Mammary epithelial cell (primary cell): ENCODE measurements at regions of chr12 and their contacts with region 1.

Region 1: DNA sequence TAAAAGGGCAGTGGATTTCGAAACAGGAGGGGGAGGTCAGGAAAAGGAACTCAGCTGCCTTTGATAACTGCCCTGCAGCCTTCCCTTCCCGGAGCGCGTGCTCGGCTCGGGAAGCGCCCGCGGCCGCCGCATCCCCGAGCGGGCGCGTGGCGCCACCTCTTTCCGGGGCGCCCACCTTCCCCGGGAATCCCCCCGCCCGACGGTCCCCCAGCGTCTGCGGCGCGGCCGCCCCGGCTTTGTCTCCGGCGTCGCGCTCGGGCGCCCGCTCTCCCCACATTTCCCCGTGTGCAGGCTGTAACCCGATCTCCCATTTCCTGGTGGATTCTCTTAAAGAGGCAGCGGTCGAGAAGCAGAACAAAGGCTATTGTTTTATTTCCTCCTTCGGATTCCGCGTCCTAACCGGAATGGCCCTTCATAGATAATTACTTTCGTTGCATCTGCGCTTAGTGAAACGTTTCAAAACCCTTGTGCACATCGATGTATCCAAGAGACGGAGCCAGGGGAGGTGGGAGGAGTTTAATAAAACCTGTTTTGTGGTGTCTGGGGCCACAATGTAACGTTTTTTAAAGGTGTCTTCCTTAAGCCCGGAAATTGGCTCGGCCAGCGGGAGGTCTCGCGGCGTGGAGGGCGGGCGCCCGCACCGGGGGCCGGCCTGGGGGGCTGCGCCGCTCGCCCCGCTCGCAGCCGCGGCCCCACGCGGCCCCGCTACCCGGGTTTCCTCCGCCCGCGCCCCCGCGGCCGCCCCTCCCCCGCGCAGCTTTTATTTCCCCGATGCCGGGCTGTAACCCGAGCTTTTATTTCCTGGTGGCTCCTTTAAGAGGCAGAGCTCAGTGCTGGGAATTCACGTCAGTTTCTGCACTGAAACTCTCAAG is at the start of gene ETV6:
- DNase-seq: peak; percentile 90
- H3K4me3 ChIP-seq: peak within 1 kb of the TSS; percentile 69 to 99 (median 92)
- H3K27ac ChIP-seq: peak within 1 kb of the TSS; percentile 97
- H3K4me1 ChIP-seq: peaks cover 21% of the 10 kb centered on the region
- H3K27me3 ChIP-seq: no peaks in the 10 kb centered on the region
- CTCF ChIP-seq: no peak
- total RNA-seq, gene ETV6: 16.7 to 28.3 TPM

Region 2: DNA sequence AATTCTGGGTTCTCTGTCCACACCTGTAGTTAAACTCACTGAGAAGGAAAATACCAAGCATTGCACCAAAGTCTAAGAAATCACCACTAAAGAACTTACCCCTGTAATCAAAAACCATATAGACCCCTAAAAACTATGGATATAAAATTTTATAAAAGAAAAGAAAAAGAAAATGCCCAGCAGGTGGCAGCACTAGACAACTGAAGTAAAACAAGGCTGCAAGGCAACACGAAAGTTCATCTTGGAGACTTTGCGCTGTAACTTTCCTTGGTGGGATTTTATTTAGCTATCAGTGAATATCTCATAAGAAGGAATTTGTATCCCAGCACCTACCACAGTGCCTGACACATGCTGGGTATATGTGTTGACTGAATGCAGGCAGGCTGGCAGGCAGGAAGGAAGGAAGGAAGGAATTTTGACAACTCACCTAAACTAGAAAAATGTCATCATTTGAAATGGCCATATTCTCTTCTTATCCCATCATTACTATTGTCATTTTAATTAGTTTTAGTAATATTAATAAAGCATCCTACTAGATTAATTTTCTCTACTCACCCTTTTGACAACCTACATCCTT is 67.8 kb before region 1 on chr12:
- CTCF ChIA-PET with region 1: no interaction called
- dilution Hi-C with region 1: no loop called
- in situ Hi-C with region 1: no loop called
- intact Hi-C with region 1: loop called (anchors 1 kb)
- DNase-seq: peak; percentile 52
- H3K4me3 ChIP-seq: no peak overlapping the region
- H3K27ac ChIP-seq: no peak overlapping the region
- H3K4me1 ChIP-seq: peaks cover 24% of the 10 kb centered on the region
- H3K27me3 ChIP-seq: no peaks in the 10 kb centered on the region
- CTCF ChIP-seq: peak; percentile 27 to 48

Region 3: DNA sequence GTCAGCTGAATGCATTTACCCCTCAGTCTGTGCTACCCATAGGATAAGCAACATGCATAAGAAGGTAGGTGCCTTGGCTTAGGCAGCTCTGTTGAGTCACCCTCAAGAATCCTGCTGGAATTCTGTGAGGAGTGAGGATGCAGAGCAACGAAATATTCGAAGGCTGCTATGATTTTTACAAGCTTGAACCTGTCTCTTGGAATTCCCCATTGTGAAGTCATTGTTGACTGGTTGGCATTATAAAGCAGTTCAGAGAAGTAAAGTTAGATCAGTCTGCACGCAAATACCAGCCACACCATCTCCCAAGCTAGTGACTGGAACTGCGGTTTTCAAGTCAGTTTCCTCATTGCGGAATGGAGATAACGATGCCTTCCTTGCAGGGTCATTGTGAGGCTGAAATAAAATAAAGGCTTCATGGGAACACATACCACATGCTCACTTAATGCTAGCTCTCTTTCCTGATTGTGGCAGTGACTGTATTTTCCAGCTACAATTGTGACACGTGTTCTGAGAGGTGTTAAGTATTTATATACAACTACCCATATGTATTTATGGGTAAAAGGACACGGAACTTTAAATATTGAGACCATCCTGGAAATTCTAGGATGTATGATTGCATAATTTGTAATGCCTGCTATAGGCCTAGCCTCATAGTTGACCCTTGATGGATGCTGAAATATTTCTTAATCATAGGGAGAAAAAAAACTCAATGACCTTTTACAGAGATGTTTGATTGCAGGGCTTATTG is 97.1 kb after region 1 on chr12:
- CTCF ChIA-PET with region 1: no interaction called
- dilution Hi-C with region 1: no loop called
- in situ Hi-C with region 1: no loop called
- intact Hi-C with region 1: loop called (anchors 1 kb)
- DNase-seq: peak; percentile 99
- H3K4me3 ChIP-seq: no peak overlapping the region
- H3K27ac ChIP-seq: peak overlapping the region; percentile 89
- H3K4me1 ChIP-seq: peaks cover 62% of the 10 kb centered on the region
- H3K27me3 ChIP-seq: no peaks in the 10 kb centered on the region
- CTCF ChIP-seq: no peak

Region 4: GRCh38 chr12:11812586-11813427 is 163.7 kb after region 1 on chr12:
- CTCF ChIA-PET with region 1: no interaction called
- dilution Hi-C with region 1: no loop called
- in situ Hi-C with region 1: no loop called
- intact Hi-C with region 1: loop called (anchors 5 kb)
- DNase-seq: peak; percentile 36
- H3K4me3 ChIP-seq: peak overlapping the region in 2 of 3 experiments; percentile 18 to 32
- H3K27ac ChIP-seq: peak overlapping the region; percentile 26
- H3K4me1 ChIP-seq: peaks cover 28% of the 10 kb centered on the region
- H3K27me3 ChIP-seq: no peaks in the 10 kb centered on the region
- CTCF ChIP-seq: peak in 1 of 2 donors; percentile 20

Region 5: DNA sequence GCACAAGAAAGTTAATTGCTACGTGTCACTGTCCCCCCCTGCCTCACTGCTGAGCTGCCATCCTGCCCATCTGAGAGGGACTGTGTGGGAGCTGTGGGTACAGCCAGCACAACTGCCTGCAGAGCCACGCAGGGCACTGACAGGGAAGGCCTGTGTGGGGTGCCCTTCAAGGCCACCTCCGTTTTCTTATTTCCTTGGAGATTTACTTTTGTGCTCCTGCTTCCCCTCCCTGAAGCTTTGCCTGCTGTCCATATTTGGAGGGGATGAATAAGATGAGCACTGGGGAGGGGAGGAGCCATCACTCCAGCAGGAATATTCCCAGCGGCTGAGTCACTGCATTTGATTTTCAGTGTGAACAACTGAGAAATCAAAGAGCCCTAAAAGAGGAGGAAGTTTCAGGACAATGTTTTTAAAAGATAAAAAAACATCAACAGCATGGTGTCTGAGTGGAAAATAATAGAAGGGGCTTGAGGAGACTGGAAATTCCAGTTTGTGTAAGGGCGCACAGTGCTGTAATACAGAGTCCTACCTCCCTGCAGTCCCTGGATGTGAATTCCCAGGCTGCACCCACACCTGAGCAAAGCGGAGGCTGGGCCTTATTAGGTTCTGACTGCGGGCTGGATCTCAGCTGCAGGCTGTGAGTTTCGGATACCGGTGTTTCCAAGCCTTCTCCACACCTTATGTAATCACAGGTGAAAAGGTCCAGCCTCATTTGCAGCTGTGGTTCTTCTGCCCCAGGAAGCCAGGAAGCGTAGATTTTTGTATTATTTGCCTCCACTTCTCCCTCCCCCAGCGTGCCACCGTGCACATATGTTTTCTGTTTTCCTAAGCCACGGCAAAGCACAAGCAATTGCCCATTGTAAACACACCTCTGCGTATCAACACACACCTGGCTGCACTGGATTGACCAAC is 229.1 kb after region 1 on chr12:
- CTCF ChIA-PET with region 1: no interaction called
- dilution Hi-C with region 1: no loop called
- in situ Hi-C with region 1: no loop called
- intact Hi-C with region 1: loop called (anchors 2 kb)
- DNase-seq: peak; percentile 92
- H3K4me3 ChIP-seq: peak overlapping the region in 1 of 3 experiments; percentile 7
- H3K27ac ChIP-seq: peak overlapping the region; percentile 80
- H3K4me1 ChIP-seq: peaks cover 55% of the 10 kb centered on the region
- H3K27me3 ChIP-seq: no peaks in the 10 kb centered on the region
- CTCF ChIP-seq: no peak

Region 6: GRCh38 chr12:11941606-11942337 is 292.7 kb after region 1 on chr12:
- CTCF ChIA-PET with region 1: no interaction called
- dilution Hi-C with region 1: no loop called
- in situ Hi-C with region 1: no loop called
- intact Hi-C with region 1: loop called (anchors 2 kb)
- DNase-seq: peak; percentile 89
- H3K4me3 ChIP-seq: no peak overlapping the region
- H3K27ac ChIP-seq: peak overlapping the region; percentile 84
- H3K4me1 ChIP-seq: peaks cover 14% of the 10 kb centered on the region
- H3K27me3 ChIP-seq: no peaks in the 10 kb centered on the region
- CTCF ChIP-seq: no peak

Region 7: DNA sequence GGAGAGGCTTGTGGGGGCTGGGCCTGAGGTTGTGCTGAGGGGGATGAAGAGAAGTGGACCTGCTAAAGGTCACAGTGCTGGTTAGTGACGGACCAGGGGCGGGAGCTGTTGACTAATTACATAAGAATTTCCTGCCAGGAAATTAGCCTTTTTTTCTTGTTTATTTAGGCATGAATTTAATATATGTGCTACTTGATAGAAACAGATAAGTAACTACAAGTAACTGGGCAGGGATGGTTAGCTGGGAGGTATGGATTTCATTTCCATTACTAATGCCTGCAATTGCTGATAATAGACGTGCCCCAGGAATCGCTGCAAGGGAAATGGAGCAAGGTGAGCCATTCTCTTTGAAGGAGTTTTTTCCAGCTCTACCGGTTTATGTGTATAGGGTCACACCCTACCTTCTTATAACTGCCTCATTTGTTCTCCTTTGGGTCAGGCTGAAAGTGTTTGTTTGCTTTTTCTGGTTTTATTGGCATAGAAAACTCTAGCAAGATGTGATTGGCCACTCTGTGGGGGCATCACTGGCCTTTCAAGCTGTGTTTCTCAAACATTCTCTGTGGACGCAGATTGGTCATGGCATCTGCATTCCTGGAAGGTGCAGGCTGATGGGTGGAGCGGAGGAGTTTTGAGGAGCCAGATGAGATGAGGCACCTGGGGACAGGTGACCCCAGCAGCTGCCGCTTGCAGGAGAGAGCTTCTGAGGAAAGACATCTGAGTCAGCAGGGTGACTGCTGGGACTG is 1223.2 kb after region 1 on chr12:
- CTCF ChIA-PET with region 1: interaction called, 13 read pairs
- dilution Hi-C with region 1: no loop called
- in situ Hi-C with region 1: no loop called
- intact Hi-C with region 1: no loop called
- DNase-seq: peak; percentile 98
- H3K4me3 ChIP-seq: peak overlapping the region in 1 of 3 experiments; percentile 3
- H3K27ac ChIP-seq: peak overlapping the region; percentile 89
- H3K4me1 ChIP-seq: peaks cover 39% of the 10 kb centered on the region
- H3K27me3 ChIP-seq: no peaks in the 10 kb centered on the region
- CTCF ChIP-seq: no peak